MCF 10A (cell line): ENCODE measurements at regions of chr1 and their contacts with region 1.

Region 1: GRCh38 chr1:174726167-174726879 is 273.4 kb upstream of the CACYBP start:
- DNase-seq: peak; percentile 36
- H3K4me3 Mint-ChIP-seq: no peak overlapping the region
- H3K27ac Mint-ChIP-seq: no peak overlapping the region
- H3K4me1 Mint-ChIP-seq: no peaks in the 10 kb centered on the region
- H3K27me3 Mint-ChIP-seq: no peaks in the 10 kb centered on the region
- CTCF ChIP-seq: peak; percentile 69

Region 2: GRCh38 chr1:174097426-174097825 is 628.9 kb before region 1 on chr1:
- CTCF ChIA-PET with region 1: interaction called, 3 read pairs
- POLR2A ChIA-PET with region 1: no interaction called
- intact Hi-C with region 1: loop called (anchors 5 kb)
- DNase-seq: no peak
- H3K4me3 Mint-ChIP-seq: no peak overlapping the region
- H3K27ac Mint-ChIP-seq: no peak overlapping the region
- H3K4me1 Mint-ChIP-seq: no peaks in the 10 kb centered on the region
- H3K27me3 Mint-ChIP-seq: no peaks in the 10 kb centered on the region
- CTCF ChIP-seq: no peak

Region 3: GRCh38 chr1:174682419-174683008 is 43.8 kb before region 1 on chr1:
- CTCF ChIA-PET with region 1: interaction called, 10 read pairs
- POLR2A ChIA-PET with region 1: no interaction called
- intact Hi-C with region 1: no loop called
- DNase-seq: no peak
- H3K4me3 Mint-ChIP-seq: no peak overlapping the region
- H3K27ac Mint-ChIP-seq: no peak overlapping the region
- H3K4me1 Mint-ChIP-seq: no peaks in the 10 kb centered on the region
- H3K27me3 Mint-ChIP-seq: no peaks in the 10 kb centered on the region
- CTCF ChIP-seq: no peak

Region 4: GRCh38 chr1:174713796-174714195 is 12.5 kb before region 1 on chr1:
- CTCF ChIA-PET with region 1: interaction called, 11 read pairs
- POLR2A ChIA-PET with region 1: no interaction called
- intact Hi-C with region 1: no loop called
- DNase-seq: no peak
- H3K4me3 Mint-ChIP-seq: no peak overlapping the region
- H3K27ac Mint-ChIP-seq: no peak overlapping the region
- H3K4me1 Mint-ChIP-seq: no peaks in the 10 kb centered on the region
- H3K27me3 Mint-ChIP-seq: no peaks in the 10 kb centered on the region
- CTCF ChIP-seq: no peak

Region 5: DNA sequence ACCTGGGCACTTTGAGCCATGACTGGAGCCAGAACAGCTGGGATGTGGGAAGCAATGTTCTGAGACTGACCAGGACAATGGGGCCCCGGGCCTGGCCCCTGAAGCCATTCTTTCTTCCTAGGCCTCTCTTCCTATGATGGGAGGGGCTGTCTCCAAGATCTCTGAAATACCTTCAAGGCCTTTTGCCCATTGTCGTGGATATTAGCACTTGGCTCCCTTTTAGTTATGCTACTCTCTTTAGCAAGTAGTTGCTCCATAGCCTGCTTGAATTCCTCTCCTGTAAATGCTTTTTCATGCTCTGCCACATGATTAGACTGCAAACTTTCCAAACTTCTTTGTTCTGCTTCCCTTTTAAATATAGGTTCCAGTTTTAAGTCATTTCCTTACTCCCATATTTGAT is 10.5 kb after region 1 on chr1:
- CTCF ChIA-PET with region 1: interaction called, 14 read pairs
- POLR2A ChIA-PET with region 1: no interaction called
- intact Hi-C with region 1: no loop called
- DNase-seq: no peak
- H3K4me3 Mint-ChIP-seq: no peak overlapping the region
- H3K27ac Mint-ChIP-seq: no peak overlapping the region
- H3K4me1 Mint-ChIP-seq: no peaks in the 10 kb centered on the region
- H3K27me3 Mint-ChIP-seq: no peaks in the 10 kb centered on the region
- CTCF ChIP-seq: no peak

Region 6: DNA sequence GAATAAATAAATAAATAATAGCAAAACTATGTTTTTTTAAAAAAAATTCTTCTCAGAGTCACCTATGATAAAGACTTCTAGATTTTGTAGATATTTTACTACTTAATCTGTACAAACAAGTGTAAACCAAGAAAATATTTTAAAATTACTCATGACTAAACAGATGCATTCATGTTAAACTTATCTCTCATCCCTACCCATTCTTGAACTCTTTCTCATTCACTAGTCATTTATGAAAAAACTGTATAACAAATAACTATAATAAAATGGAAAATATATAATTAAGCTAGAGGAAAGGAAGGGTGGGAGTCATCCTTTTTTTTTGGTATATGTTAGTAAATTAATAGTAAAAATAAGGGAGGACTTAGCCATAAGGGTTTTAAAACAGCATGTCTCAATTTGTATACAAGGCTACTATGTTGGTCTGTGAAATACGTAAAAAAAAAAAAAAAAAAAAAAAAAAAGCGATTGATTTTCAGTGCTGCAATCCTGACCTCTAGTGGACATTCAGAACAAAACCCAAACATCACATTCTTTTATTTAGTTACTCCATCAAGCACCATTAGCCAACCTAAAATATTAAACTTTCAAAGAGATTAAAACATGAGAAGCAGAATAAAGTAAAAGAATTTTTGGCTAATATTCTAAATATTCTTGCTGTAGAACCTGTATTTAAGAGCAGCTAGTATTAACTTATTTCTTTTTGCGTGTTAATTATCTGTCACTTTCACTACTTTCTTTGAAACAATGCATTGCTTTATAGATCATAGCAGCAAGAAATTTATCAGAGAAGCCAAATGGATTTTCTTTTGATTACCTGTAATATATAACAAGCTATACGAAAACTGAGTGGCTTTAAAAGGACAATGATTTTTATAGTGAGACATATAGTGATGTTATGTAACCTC is 17.6 kb after region 1 on chr1:
- CTCF ChIA-PET with region 1: interaction called, 14 read pairs
- POLR2A ChIA-PET with region 1: no interaction called
- intact Hi-C with region 1: no loop called
- DNase-seq: peak; percentile 65
- H3K4me3 Mint-ChIP-seq: no peak overlapping the region
- H3K27ac Mint-ChIP-seq: no peak overlapping the region
- H3K4me1 Mint-ChIP-seq: no peaks in the 10 kb centered on the region
- H3K27me3 Mint-ChIP-seq: no peaks in the 10 kb centered on the region
- CTCF ChIP-seq: peak; percentile 76